ENCODE measurements at regions of chr6 and their contacts with region 1.

Region 1: GRCh38 chr6:73566954-73567591 is 46.2 kb upstream of the EEF1A1 start:
- DNase-seq: no peak
- CTCF ChIP-seq: no peak

Region 2: DNA sequence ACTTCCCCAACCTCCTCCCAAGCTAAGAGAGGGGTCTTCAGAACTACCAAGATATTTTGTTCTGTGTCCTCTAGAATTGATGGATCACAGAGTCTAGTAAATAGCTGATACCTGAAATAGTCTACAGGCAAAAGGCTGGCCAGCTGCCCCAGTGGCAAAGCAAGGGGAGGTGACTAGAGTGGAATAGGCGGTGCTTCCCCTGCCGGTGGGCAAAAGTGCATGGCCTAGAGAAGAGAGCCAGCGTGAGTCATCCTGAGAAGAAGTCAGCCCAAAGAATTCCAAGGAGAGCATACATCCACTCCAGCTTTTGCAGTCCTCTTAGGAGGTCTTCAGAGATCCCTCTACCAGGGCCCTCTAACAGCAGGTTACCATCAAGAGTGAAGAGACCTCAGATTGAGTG is 227.7 kb before region 1 on chr6:
- CTCF ChIA-PET with region 1: no interaction called
- POLR2A ChIA-PET with region 1: no interaction called
- DNase-seq: no peak
- CTCF ChIP-seq: no peak

Region 3: DNA sequence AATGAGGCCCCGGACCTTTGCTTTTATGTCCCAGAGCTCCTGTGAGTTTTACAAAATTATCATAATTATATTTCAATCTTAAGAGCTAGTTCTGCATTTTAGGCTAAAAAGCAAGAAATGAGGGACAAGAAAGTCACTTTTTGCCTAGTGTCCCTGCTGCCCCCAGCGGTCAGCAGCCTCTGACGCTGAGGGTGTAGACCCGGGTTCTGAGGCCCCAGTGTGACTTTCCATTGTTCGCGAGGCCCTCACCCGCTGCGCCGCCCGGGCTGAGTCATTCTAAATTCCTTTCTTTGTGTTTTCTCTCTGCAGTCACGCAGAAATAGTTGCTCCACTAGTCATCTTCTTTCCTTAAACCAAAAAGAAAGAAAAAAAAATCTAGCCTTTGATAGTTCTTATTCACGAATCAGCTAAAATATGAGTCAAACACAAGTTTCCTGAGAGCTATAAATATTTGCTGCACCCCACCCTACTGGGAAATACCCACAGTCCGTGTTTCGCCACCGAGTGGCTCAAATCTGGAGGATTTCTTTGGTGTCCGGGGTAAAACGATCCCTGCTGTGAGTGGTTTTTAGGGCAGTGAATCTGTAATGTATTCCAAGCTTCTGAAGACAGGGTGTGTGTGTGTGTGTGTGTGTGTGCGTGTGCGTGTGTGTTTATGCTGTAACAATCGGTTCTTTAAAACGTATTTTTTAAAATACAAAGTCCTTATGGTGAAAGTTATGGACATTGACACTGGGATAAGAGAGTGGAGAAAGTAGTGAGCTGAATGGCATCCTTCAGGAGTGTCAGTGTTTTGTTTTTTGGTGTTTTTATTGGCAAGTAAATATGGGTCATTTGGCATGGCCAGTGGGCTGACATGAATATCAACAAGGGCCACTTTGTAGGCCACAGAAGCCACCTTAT is 13.4 kb after region 1 on chr6:
- CTCF ChIA-PET with region 1: interaction called, 11 read pairs
- POLR2A ChIA-PET with region 1: no interaction called
- DNase-seq: peak; percentile 70
- CTCF ChIP-seq: peak; percentile 45

Measured in GM10248 (cell line).